B cell (primary cell): ENCODE measurements at regions of chr1 and their contacts with region 1.

Region 1: DNA sequence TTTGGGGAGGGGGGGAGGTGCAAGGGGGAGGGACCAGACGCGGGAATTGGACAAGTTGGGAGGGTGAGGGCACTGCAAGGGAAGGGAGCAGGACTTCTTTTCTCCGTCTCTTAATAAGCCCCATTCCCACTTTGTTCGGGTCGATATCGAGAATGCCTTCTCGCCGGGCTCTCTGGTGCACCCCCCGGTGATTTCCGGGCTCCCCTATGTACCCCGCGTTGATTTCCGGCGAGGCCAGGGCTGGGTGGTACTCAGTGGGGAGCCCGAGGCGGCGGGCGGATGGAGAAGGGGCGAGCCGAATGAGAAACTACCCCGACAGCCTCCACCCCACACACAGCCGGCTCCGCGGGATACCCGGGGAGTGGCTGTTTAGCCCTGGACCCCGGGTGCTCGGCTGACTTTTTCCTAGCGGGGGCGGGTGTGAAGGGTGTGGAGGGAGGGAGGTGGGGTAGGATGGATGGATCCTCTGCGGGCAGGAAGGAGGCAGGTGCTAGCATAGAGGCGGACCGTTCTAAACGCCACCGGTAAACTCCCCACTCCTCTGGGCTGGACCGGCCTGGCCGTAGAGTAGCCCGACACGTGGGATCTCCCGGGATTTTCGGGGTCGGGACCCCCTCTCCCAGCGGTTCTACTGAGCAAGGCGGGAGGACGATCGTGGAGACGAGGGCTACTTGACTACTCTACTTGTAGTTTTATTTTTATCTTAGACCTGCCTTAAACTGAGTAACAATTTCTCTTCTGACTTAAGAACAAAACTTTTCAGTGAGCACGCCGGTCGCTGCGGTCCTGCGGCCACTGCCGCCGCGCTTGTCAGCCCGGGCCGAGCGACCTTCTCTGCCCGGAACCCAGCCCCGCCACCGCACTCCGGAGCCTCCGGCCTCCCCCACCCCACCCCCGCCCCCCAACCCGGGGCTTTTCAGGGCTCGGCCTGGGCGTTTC is 1.0 kb downstream of the RNF220 start:
- DNase-seq: peak; percentile 65
- ATAC-seq: peak; percentile 22
- H3K4me3 ChIP-seq: peak overlapping the region; percentile 42 to 77 (median 62)
- H3K4me3 Mint-ChIP-seq: peak overlapping the region; percentile 96
- H3K27ac ChIP-seq: no peak overlapping the region
- H3K27ac Mint-ChIP-seq: peak overlapping the region; percentile 68
- H3K4me1 ChIP-seq: peaks cover 47 to 60% of the 10 kb centered on the region in 2 donors
- H3K4me1 Mint-ChIP-seq: peaks cover 44% of the 10 kb centered on the region
- H3K27me3 ChIP-seq: peaks cover 0 to 71% (median 57%) of the 10 kb centered on the region in 4 experiments
- H3K27me3 Mint-ChIP-seq: peaks cover 44% of the 10 kb centered on the region
- CTCF ChIP-seq: no peak

Region 2: GRCh38 chr1:43881415-43881814 is 524.7 kb before region 1 on chr1:
- CTCF ChIA-PET with region 1: no interaction called
- POLR2A ChIA-PET with region 1: no interaction called
- intact Hi-C with region 1: no loop called
- DNase-seq: no peak
- ATAC-seq: no peak
- H3K4me3 ChIP-seq: no peak overlapping the region
- H3K4me3 Mint-ChIP-seq: no peak overlapping the region
- H3K27ac ChIP-seq: no peak overlapping the region
- H3K27ac Mint-ChIP-seq: no peak overlapping the region
- H3K4me1 ChIP-seq: no peaks in the 10 kb centered on the region
- H3K4me1 Mint-ChIP-seq: no peaks in the 10 kb centered on the region
- H3K27me3 ChIP-seq: no peaks in the 10 kb centered on the region
- H3K27me3 Mint-ChIP-seq: no peaks in the 10 kb centered on the region
- CTCF ChIP-seq: no peak

Region 3: GRCh38 chr1:44417351-44418021 is 11.4 kb after region 1 on chr1:
- CTCF ChIA-PET with region 1: no interaction called
- POLR2A ChIA-PET with region 1: no interaction called
- intact Hi-C with region 1: loop called (anchors 1 kb)
- DNase-seq: peak; percentile 59
- ATAC-seq: no peak
- H3K4me3 ChIP-seq: peak overlapping the region in 3 of 5 experiments; percentile 22 to 40 (median 34)
- H3K4me3 Mint-ChIP-seq: peak overlapping the region; percentile 62
- H3K27ac ChIP-seq: no peak overlapping the region
- H3K27ac Mint-ChIP-seq: no peak overlapping the region
- H3K4me1 ChIP-seq: peaks cover 12 to 14% of the 10 kb centered on the region in 2 donors
- H3K4me1 Mint-ChIP-seq: peaks cover 11% of the 10 kb centered on the region
- H3K27me3 ChIP-seq: peaks cover 0 to 82% (median 66%) of the 10 kb centered on the region in 4 experiments
- H3K27me3 Mint-ChIP-seq: peaks cover 50% of the 10 kb centered on the region
- CTCF ChIP-seq: no peak